Adrenal gland (tissue), 19 donors: ENCODE measurements at regions of chr10 and their contacts with region 1.

Region 1: DNA sequence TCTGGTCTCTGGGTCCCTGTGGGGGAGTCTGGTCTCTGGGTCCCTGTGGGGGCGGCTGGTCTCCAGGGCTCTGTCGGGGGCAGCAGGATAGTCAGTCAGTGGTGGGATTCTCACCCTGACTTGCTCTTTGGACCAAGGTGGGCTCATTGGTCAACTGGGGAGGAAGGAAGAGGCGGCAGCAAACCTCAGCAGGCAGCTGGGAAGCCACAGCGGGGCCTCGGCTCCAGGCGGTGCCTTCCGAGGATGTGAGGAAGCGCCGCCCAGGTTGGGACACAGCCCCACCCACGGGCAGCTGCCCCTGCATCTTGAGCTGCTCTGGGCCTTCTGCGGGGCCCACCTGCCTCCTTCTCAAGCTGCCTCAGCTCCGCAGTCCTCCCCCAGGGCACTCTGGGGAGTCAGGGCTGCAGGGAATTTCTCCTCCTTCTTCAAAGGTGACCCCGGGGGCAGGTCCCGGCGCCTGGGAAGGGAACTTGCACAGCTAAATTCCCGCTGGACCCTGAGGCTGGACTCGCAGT is 20.4 kb upstream of the KNDC1 start:
- DNase-seq: peak in 1 of 7 donors; percentile 8
- H3K4me3 ChIP-seq: no peak overlapping the region
- H3K27ac ChIP-seq: no peak overlapping the region
- H3K4me1 ChIP-seq: peaks cover 5 to 10% of the 10 kb centered on the region in 2 donors
- H3K27me3 ChIP-seq: peaks cover 12% of the 10 kb centered on the region
- CTCF ChIP-seq: no peak
- POLR2A ChIP-seq: no peak

Region 2: DNA sequence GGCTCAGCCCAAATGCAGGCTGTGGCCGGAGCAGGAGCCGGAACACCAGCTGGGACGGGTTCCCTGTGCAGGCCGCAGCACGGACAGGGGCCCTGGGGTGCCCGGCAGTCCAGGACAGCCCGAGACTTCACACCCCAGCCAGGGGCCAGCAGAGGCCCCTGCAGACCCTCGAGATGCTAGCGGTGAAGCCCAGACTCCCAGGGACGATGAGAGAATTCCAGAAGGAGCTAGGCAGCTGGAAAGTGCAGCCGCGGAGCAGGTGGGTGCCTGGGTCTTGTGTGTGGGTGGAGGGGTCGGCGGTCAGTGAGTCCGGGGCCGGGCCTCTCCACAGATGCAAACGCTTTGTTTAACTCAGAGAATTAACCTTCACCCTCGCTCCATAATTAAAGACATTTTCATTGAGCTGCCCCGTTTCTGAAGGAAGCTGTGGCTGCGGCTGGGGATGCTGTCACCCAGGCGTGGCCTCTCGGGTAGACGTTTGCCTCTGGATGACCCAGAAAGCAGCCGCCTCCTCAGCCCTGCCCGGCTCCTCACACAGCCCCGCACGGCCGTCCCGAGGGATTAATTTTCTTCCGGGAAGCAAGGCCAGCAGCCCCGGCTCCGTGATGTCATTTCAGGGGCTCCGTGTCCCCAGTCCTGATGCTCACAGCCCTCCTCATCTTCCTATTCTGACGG is 46.9 kb after region 1 on chr10:
- intact Hi-C with region 1: no loop called
- DNase-seq: no peak
- H3K4me3 ChIP-seq: no peak overlapping the region
- H3K27ac ChIP-seq: no peak overlapping the region
- H3K4me1 ChIP-seq: no peaks in the 10 kb centered on the region
- H3K27me3 ChIP-seq: no peaks in the 10 kb centered on the region
- CTCF ChIP-seq: no peak
- POLR2A ChIP-seq: no peak

Region 3: DNA sequence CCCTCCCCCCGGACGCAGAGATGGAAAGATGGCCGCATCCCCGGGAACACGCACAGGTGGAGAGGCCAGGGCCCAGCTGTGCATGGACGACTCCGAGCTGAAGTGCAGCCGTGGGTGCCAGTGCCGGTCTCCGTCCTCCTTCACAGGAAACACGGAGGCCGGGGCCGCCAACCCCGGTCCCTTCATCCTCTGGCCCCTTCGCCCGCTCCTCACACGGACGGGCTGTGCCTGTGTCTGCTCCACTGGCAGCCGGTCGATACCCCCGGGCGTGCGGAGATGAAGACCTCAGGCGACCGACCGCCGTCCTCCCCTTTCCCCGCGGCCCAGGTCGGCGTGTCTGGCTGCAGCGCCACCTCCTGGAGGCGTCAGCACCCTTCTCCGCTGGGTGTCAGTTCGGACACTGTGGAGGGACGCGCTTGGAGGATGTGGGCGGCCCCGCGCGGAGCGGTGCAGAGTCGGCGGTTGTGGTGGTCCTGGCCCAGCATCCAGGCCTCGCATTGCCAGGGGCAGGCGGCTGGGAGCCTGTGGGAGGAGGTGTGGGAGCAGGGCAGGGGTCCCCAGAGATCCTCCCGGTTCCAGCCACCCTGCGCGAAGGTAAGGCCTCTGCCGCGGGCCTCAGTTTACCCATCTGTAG is 179.0 kb after region 1 on chr10:
- intact Hi-C with region 1: loop called in 1 of 2 experiments (anchors 10 kb)
- DNase-seq: peak; percentile 55 to 83 (median 71)
- H3K4me3 ChIP-seq: peak overlapping the region in 1 of 4 donors; percentile 42
- H3K27ac ChIP-seq: peak overlapping the region in 2 of 5 donors; percentile 41 to 49
- H3K4me1 ChIP-seq: no peaks in the 10 kb centered on the region
- H3K27me3 ChIP-seq: no peaks in the 10 kb centered on the region
- CTCF ChIP-seq: peak; percentile 56 to 80 (median 68)
- POLR2A ChIP-seq: no peak